HepG2 (cell line): ENCODE measurements at regions of chr6 and their contacts with region 1.

Region 1: DNA sequence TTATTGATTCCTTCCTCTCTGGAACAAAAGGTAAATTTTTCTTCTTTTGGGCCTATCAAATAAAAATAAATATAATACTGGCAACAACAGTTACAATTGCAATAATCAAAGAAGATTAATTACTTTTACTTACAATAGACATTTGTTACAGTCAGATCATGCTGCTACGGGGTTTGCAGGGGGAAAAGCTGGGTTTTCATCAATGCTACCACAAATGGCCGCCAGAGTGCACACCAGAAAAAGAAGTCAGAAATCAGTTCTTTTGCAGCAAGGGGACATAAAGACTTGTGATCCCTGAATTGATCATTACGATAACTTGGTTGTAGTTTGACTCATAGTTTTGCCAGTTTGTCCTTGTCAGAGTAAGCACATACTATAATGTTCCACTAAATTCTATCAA is 714.5 kb upstream of the EYS start:
- DNase-seq: peak; percentile 16
- ATAC-seq: peak; percentile 80
- H3K4me3 ChIP-seq: no peak overlapping the region
- H3K27ac ChIP-seq: no peak overlapping the region
- H3K4me1 ChIP-seq: no peaks in the 10 kb centered on the region
- H3K27me3 ChIP-seq: no peaks in the 10 kb centered on the region
- CTCF ChIP-seq: peak; percentile 67
- EP300 ChIP-seq: no peak
- POLR2A ChIP-seq: no peak
- RAD21 ChIP-seq: peak; percentile 48; the same call in 1 of the 2 replicates

Region 2: GRCh38 chr6:66396549-66396948 is 25.0 kb before region 1 on chr6:
- CTCF ChIA-PET with region 1: no interaction called
- POLR2A ChIA-PET with region 1: no interaction called
- in situ Hi-C with region 1: no loop called
- intact Hi-C with region 1: no loop called
- DNase-seq: no peak
- ATAC-seq: peak; percentile 28; the same call in 1 of the 3 replicates
- H3K4me3 ChIP-seq: no peak overlapping the region
- H3K27ac ChIP-seq: no peak overlapping the region
- H3K4me1 ChIP-seq: no peaks in the 10 kb centered on the region
- H3K27me3 ChIP-seq: no peaks in the 10 kb centered on the region
- CTCF ChIP-seq: no peak
- EP300 ChIP-seq: no peak
- POLR2A ChIP-seq: no peak
- RAD21 ChIP-seq: no peak

Region 3: GRCh38 chr6:66489269-66489987 is 67.9 kb after region 1 on chr6:
- CTCF ChIA-PET with region 1: no interaction called
- POLR2A ChIA-PET with region 1: no interaction called
- in situ Hi-C with region 1: no loop called
- intact Hi-C with region 1: loop called (anchors 2 kb)
- DNase-seq: peak; percentile 81
- ATAC-seq: peak; percentile 98
- H3K4me3 ChIP-seq: peak overlapping the region in 2 of 3 experiments; percentile 5 to 31; a peak in 2 of 6 replicates
- H3K27ac ChIP-seq: no peak overlapping the region
- H3K4me1 ChIP-seq: peaks cover 17% of the 10 kb centered on the region
- H3K27me3 ChIP-seq: no peaks in the 10 kb centered on the region
- CTCF ChIP-seq: peak; percentile 51
- EP300 ChIP-seq: peak in 1 of 2 experiments; percentile 46; a peak in 1 of 4 replicates
- POLR2A ChIP-seq: no peak
- RAD21 ChIP-seq: 0 out of 2 replicates have a peak, but pooled peaks have one; percentile 23

Region 4: GRCh38 chr6:66496659-66497058 is 75.1 kb after region 1 on chr6:
- CTCF ChIA-PET with region 1: interaction called, 41 read pairs
- POLR2A ChIA-PET with region 1: no interaction called
- in situ Hi-C with region 1: loop called (anchors 5 kb)
- intact Hi-C with region 1: loop called (anchors 1 kb)
- DNase-seq: peak; percentile 50
- ATAC-seq: peak; percentile 95
- H3K4me3 ChIP-seq: no peak overlapping the region
- H3K27ac ChIP-seq: no peak overlapping the region
- H3K4me1 ChIP-seq: no peaks in the 10 kb centered on the region
- H3K27me3 ChIP-seq: no peaks in the 10 kb centered on the region; a peak in 1 of 5 replicates
- CTCF ChIP-seq: peak; percentile 75
- EP300 ChIP-seq: no peak
- POLR2A ChIP-seq: no peak
- RAD21 ChIP-seq: peak; percentile 52